ENCODE measurements at regions of chr9 and their contacts with region 1.

Region 1: GRCh38 chr9:100011062-100011681 is 87.6 kb downstream of the ERP44 start:
- DNase-seq: peak; percentile 60
- H3K4me3 Mint-ChIP-seq: no peak overlapping the region
- H3K27ac Mint-ChIP-seq: no peak overlapping the region
- H3K4me1 Mint-ChIP-seq: no peaks in the 10 kb centered on the region
- H3K27me3 Mint-ChIP-seq: no peaks in the 10 kb centered on the region
- CTCF ChIP-seq: peak; percentile 62

Region 2: DNA sequence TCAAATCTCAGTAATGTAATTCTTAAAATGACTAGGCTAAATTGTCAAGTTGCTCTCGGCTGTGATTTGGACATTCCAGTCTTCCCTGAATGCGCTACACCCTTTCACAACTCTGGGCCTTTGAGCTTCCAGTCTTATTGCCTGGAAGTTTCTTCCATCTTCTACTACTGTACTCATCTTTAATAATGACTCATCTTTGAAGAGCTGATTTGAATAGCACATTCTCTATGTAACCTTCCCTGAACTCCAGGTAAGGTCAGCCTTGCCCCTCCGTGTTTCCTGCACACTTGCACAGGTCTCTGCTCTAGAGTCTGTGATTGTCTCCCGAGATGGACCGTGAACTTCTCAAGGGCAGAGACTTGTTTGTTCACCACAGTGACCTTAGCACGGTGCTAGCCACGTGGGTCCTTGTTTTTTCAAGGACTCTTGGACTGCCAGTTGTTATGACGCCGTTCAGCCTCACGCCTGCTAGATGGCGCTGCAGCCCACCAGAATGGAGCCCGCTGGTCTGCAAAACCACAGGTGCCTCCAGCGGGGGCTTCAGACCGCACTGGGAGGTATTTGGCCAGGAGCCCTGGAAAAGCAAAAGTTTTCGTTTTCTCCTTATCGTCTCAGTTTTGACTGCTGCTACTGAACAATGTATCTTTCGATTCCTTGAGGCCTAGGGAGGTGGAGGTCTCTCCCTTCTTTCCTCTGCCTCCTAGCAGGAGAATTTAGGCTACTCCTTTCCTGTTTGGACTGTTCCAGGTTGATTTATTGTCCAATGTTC is 744.7 kb before region 1 on chr9:
- CTCF ChIA-PET with region 1: no interaction called
- POLR2A ChIA-PET with region 1: interaction called, 3 read pairs
- intact Hi-C with region 1: loop called (anchors 2 kb)
- DNase-seq: peak; percentile 72
- H3K4me3 Mint-ChIP-seq: peak overlapping the region; percentile 37
- H3K27ac Mint-ChIP-seq: no peak overlapping the region
- H3K4me1 Mint-ChIP-seq: peaks cover 19% of the 10 kb centered on the region
- H3K27me3 Mint-ChIP-seq: peaks cover 16% of the 10 kb centered on the region
- CTCF ChIP-seq: peak; percentile 83

Region 3: GRCh38 chr9:99807276-99807852 is 203.8 kb before region 1 on chr9:
- CTCF ChIA-PET with region 1: no interaction called
- POLR2A ChIA-PET with region 1: no interaction called
- intact Hi-C with region 1: loop called (anchors 5 kb)
- DNase-seq: peak; percentile 83
- H3K4me3 Mint-ChIP-seq: no peak overlapping the region
- H3K27ac Mint-ChIP-seq: no peak overlapping the region
- H3K4me1 Mint-ChIP-seq: no peaks in the 10 kb centered on the region
- H3K27me3 Mint-ChIP-seq: no peaks in the 10 kb centered on the region
- CTCF ChIP-seq: peak; percentile 80

Region 4: DNA sequence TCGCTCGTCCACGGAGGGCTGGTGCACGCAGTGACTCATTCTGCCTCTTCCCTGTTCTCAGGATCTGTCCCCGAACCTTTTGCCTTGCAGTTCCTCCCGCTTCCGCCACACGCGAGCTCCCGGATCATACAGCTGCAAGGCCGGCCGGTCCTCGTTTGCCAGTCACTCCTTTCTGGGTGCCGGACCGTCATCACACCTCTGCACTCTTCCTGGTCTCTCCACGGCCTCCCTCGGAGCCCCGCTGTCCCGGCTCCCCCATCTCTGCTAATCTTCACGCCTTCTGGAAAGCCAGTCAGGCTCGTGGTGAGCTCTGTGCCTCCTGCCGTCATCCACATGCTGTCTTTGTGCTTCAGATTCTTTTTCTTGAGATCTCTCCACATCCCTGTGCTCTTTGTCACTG is 12.9 kb before region 1 on chr9:
- CTCF ChIA-PET with region 1: interaction called, 11 read pairs
- POLR2A ChIA-PET with region 1: interaction called, 3 read pairs
- intact Hi-C with region 1: no loop called
- DNase-seq: no peak
- H3K4me3 Mint-ChIP-seq: no peak overlapping the region
- H3K27ac Mint-ChIP-seq: peak overlapping the region; percentile 37
- H3K4me1 Mint-ChIP-seq: no peaks in the 10 kb centered on the region
- H3K27me3 Mint-ChIP-seq: no peaks in the 10 kb centered on the region
- CTCF ChIP-seq: no peak

Measured in MCF 10A (cell line).